ENCODE measurements at regions of chr12 and their contacts with region 1.

Region 1: DNA sequence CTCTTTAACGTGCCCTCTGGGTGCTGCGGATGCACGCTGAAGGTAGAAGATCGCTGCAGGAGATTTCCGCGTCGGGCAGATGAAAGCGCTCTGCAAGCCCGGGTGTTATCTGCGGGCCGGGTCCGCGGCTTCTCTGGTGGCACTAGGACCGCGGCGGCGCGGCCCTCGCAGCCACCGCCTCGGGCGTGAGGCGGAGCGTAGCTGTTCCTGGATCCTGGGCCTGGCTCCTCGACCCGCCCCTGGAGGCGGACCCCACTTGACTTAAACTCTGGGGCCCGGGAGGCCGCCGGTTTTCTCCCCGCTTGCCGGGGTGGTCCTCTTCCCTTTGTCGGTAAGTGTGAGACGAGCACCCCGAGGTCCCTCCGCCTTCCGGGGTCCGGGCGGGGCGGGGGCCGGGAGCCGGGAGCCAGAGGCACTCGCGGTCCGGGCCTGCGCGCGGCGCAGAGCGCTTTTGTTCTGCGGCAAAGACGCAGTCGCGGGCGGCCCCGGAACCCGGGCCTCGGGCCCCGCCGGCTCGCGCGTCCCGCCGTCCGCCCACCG is at the start of gene RESF1:
- DNase-seq: peak; percentile 77 to 93
- ATAC-seq: peak; percentile 75 to 87 (median 83)
- H3K4me3 ChIP-seq: peak within 1 kb of the TSS; percentile 65
- H3K4me3 Mint-ChIP-seq: peak within 1 kb of the TSS; percentile 98
- H3K27ac ChIP-seq: peak within 1 kb of the TSS; percentile 73
- H3K27ac Mint-ChIP-seq: peak within 1 kb of the TSS; percentile 90 to 94
- H3K4me1 ChIP-seq: peaks cover 45% of the 10 kb centered on the region
- H3K4me1 Mint-ChIP-seq: peaks cover 70 to 80% of the 10 kb centered on the region in 2 donors
- H3K27me3 ChIP-seq: no peaks in the 10 kb centered on the region
- H3K27me3 Mint-ChIP-seq: no peaks in the 10 kb centered on the region
- CTCF ChIP-seq: no peak
- total RNA-seq, gene RESF1: 144 to 209 (median 184) TPM

Region 2: DNA sequence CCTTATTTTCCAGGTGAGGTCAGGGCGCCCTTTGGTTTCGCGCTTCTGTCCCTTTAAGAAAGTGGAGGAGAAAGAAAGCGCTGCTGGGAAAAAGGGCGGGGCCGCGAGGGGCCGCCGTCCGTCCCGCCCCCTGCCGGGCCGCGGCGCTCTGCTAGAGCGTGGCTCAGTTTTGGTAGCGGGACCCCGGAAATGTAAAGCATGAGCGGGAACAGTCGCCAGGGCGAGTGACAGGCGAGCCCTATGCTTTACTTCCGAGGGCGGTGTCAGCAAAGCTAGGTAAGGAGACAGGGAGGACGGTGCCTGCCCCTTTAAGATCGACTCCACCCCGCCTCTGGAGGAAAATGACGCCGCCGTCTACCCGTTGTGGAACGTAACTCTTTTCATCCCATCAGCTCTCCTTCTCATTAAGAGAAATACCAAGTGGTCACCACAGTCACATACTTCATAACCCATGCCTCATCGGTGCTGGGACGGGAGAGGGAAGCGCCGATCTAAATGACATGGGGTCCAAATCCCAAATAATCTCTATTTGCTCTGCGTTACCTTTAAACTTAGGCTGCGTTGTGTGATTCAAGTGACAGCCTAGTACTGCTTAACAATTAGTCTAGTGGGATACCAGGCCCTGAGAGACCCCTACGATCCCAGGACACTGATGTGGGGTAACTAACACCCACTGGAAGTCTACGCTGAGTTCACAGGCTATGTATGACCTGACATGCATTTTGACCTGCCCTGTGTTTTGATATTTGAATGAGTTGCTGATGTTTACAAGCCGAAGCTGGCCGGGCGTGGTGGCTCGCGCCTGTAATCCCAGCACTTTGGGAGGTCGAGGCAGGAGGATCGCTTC is 299.9 kb before region 1 on chr12 and contains the start of gene ETFBKMT:
- intact Hi-C with region 1: loop called (anchors 2 kb)
- DNase-seq: peak; percentile 80 to 96
- ATAC-seq: peak; percentile 91 to 96 (median 94)
- H3K4me3 ChIP-seq: peak within 1 kb of the TSS; percentile 48
- H3K4me3 Mint-ChIP-seq: peak within 1 kb of the TSS; percentile 93
- H3K27ac ChIP-seq: peak within 1 kb of the TSS; percentile 84
- H3K27ac Mint-ChIP-seq: peak within 1 kb of the TSS; percentile 91 to 93
- H3K4me1 ChIP-seq: peaks cover 12% of the 10 kb centered on the region
- H3K4me1 Mint-ChIP-seq: peaks cover 6 to 12% of the 10 kb centered on the region in 2 donors
- H3K27me3 ChIP-seq: no peaks in the 10 kb centered on the region
- H3K27me3 Mint-ChIP-seq: no peaks in the 10 kb centered on the region
- CTCF ChIP-seq: peak; percentile 19
- total RNA-seq, gene ETFBKMT: 1.2 to 1.9 (median 1.2) TPM

Region 3: DNA sequence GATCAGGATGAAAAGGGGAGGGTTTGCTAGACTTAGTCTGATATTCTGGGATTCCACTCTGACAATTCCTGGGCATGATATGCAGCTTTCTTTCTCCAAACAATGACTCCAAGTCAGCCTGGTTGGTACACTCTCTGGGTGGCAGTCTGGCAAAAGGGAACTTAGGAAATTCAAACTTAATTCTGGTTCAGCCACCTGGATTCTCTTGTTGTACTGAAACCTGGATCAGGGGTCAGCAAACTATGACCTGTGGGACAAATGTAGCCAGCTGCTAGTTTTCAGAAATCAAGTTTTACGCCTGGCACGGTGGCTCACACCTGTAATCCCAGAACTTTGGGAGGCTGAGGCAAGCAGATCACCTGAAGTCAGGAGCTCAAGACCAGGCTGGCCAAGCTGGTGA is 236.7 kb before region 1 on chr12:
- intact Hi-C with region 1: loop called (anchors 2 kb)
- DNase-seq: peak in 1 of 2 donors; percentile 6
- ATAC-seq: no peak
- H3K4me3 ChIP-seq: no peak overlapping the region
- H3K4me3 Mint-ChIP-seq: peak overlapping the region; percentile 87
- H3K27ac ChIP-seq: peak overlapping the region; percentile 5
- H3K27ac Mint-ChIP-seq: peak overlapping the region; percentile 89
- H3K4me1 ChIP-seq: peaks cover 32% of the 10 kb centered on the region
- H3K4me1 Mint-ChIP-seq: peaks cover 45 to 55% of the 10 kb centered on the region in 2 donors
- H3K27me3 ChIP-seq: no peaks in the 10 kb centered on the region
- H3K27me3 Mint-ChIP-seq: peaks cover 7 to 12% of the 10 kb centered on the region in 2 donors
- CTCF ChIP-seq: no peak

Region 4: GRCh38 chr12:31790759-31791158 is 168.5 kb before region 1 on chr12:
- intact Hi-C with region 1: loop called (anchors 2 kb)
- DNase-seq: no peak
- ATAC-seq: peak; percentile 56 to 61 (median 61)
- H3K4me3 ChIP-seq: no peak overlapping the region
- H3K4me3 Mint-ChIP-seq: peak overlapping the region; percentile 81
- H3K27ac ChIP-seq: no peak overlapping the region
- H3K27ac Mint-ChIP-seq: peak overlapping the region; percentile 85 to 86
- H3K4me1 ChIP-seq: peaks cover 16% of the 10 kb centered on the region
- H3K4me1 Mint-ChIP-seq: peaks cover 30 to 34% of the 10 kb centered on the region in 2 donors
- H3K27me3 ChIP-seq: no peaks in the 10 kb centered on the region
- H3K27me3 Mint-ChIP-seq: no peaks in the 10 kb centered on the region
- CTCF ChIP-seq: no peak

Region 5: GRCh38 chr12:31813305-31813704 is 145.9 kb before region 1 on chr12:
- intact Hi-C with region 1: no loop called
- DNase-seq: no peak
- ATAC-seq: no peak
- H3K4me3 ChIP-seq: no peak overlapping the region
- H3K4me3 Mint-ChIP-seq: no peak overlapping the region
- H3K27ac ChIP-seq: no peak overlapping the region
- H3K27ac Mint-ChIP-seq: no peak overlapping the region
- H3K4me1 ChIP-seq: no peaks in the 10 kb centered on the region
- H3K4me1 Mint-ChIP-seq: peaks cover 7 to 8% of the 10 kb centered on the region in 2 donors
- H3K27me3 ChIP-seq: no peaks in the 10 kb centered on the region
- H3K27me3 Mint-ChIP-seq: no peaks in the 10 kb centered on the region
- CTCF ChIP-seq: no peak

Region 6: GRCh38 chr12:31896514-31897039 is 62.7 kb before region 1 on chr12:
- intact Hi-C with region 1: loop called (anchors 1 kb)
- DNase-seq: peak; percentile 70 to 96
- ATAC-seq: peak; percentile 88 to 99 (median 90)
- H3K4me3 ChIP-seq: no peak overlapping the region
- H3K4me3 Mint-ChIP-seq: peak overlapping the region; percentile 90
- H3K27ac ChIP-seq: peak overlapping the region; percentile 91
- H3K27ac Mint-ChIP-seq: peak overlapping the region; percentile 86 to 98
- H3K4me1 ChIP-seq: peaks cover 76% of the 10 kb centered on the region
- H3K4me1 Mint-ChIP-seq: peaks cover 66 to 74% of the 10 kb centered on the region in 2 donors
- H3K27me3 ChIP-seq: no peaks in the 10 kb centered on the region
- H3K27me3 Mint-ChIP-seq: no peaks in the 10 kb centered on the region
- CTCF ChIP-seq: no peak

Region 7: GRCh38 chr12:31931796-31932715 is 27.2 kb before region 1 on chr12:
- intact Hi-C with region 1: loop called (anchors 2 kb)
- DNase-seq: peak; percentile 49 to 69
- ATAC-seq: peak; percentile 93 to 98 (median 94)
- H3K4me3 ChIP-seq: no peak overlapping the region
- H3K4me3 Mint-ChIP-seq: peak overlapping the region; percentile 41
- H3K27ac ChIP-seq: peak overlapping the region; percentile 53
- H3K27ac Mint-ChIP-seq: peak overlapping the region; percentile 62 to 81
- H3K4me1 ChIP-seq: peaks cover 47% of the 10 kb centered on the region
- H3K4me1 Mint-ChIP-seq: peaks cover 51 to 58% of the 10 kb centered on the region in 2 donors
- H3K27me3 ChIP-seq: no peaks in the 10 kb centered on the region
- H3K27me3 Mint-ChIP-seq: no peaks in the 10 kb centered on the region
- CTCF ChIP-seq: no peak

Region 8: GRCh38 chr12:31944299-31944698 is 14.9 kb before region 1 on chr12:
- intact Hi-C with region 1: no loop called
- DNase-seq: no peak
- ATAC-seq: no peak
- H3K4me3 ChIP-seq: no peak overlapping the region
- H3K4me3 Mint-ChIP-seq: no peak overlapping the region
- H3K27ac ChIP-seq: no peak overlapping the region
- H3K27ac Mint-ChIP-seq: no peak overlapping the region
- H3K4me1 ChIP-seq: no peaks in the 10 kb centered on the region
- H3K4me1 Mint-ChIP-seq: peaks cover 4 to 5% of the 10 kb centered on the region in 2 donors
- H3K27me3 ChIP-seq: no peaks in the 10 kb centered on the region
- H3K27me3 Mint-ChIP-seq: no peaks in the 10 kb centered on the region
- CTCF ChIP-seq: no peak